ENCODE measurements at regions of chr18 and their contacts with region 1.

Region 1: DNA sequence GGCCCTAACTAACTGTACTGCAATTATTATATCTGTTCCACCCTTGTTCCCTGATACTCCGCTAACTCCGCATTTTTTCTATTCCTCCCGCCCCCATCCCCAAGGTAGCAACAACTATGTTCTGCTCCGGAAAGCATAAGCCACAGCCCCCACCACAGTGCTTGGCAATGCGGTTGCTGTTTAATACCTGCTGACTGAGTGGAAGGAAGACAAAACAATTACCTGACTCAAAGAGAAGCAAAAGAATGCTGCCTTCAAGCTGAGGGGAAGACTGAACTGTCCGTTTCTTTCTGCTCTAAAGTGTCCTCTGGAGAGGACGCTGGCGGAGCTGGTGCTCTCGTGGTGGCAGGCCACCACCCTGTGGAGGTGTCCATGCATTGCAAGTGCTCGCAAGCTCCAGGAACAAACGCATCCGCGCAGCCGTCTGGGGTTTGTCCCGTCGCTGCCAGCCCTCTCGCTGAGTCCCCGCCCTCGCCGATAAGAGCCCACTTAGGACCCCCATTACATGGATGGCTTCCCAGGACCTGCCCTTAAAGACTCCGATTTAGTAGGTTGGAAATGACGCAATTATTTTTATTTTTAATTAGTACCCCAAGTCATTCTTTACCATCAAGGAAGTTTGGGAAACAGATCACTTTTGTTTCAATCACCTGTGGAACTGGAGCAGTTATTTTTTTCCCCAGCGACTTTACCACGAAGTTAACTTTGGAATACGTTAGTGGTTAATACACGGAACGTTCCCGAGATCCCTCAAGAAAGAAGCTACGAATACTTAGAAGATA is 1.6 kb upstream of the MYL12A start:
- DNase-seq: peak; percentile 79
- H3K4me3 Mint-ChIP-seq: peak overlapping the region; percentile 90
- H3K27ac Mint-ChIP-seq: peak overlapping the region; percentile 92
- H3K4me1 Mint-ChIP-seq: peaks cover 32% of the 10 kb centered on the region
- H3K27me3 Mint-ChIP-seq: no peaks in the 10 kb centered on the region

Region 2: DNA sequence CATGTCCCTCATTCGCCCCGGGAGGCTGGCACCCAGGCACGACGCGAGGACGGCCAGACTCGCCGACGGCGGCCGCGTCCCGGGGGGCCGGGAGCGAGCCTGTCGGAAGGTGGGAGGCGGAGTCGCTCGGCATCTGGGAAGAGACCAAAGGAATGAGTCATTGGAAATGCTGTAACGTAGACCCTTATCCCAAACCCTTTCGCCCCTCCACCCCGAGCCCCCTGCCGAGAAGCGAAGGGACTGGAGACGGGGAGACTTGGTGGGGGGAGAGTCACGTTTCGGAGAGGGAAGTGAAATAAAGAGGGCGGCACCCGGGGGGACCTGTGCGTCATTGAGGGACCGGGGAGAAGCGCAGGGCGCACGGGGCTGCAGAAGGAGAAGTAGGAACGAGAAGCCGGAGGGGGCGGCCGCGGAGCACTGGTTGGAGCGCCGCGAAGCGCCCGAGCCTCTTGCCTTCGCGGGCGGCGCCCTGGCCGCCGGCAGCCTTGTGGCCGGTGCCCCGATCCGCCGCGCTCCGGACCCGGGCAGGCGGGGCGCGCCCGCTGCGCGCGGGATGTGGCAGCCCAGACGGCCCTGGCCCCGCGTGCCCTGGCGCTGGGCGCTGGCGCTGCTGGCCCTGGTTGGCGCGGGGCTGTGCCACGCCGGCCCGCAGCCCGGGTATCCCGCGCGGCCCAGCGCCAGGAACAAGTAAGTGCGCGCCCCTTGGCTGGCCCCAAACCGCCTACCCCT is 399.2 kb before region 1 on chr18 and contains the start of gene EMILIN2:
- intact Hi-C with region 1: loop called (anchors 5 kb)
- DNase-seq: peak; percentile 49
- H3K4me3 Mint-ChIP-seq: peak within 1 kb of the TSS; percentile 93
- H3K27ac Mint-ChIP-seq: peak within 1 kb of the TSS; percentile 95
- H3K4me1 Mint-ChIP-seq: peaks cover 36% of the 10 kb centered on the region
- H3K27me3 Mint-ChIP-seq: peaks cover 14% of the 10 kb centered on the region
- total RNA-seq, gene EMILIN2: 53.4 and 53.5 TPM in 2 replicates

Region 3: DNA sequence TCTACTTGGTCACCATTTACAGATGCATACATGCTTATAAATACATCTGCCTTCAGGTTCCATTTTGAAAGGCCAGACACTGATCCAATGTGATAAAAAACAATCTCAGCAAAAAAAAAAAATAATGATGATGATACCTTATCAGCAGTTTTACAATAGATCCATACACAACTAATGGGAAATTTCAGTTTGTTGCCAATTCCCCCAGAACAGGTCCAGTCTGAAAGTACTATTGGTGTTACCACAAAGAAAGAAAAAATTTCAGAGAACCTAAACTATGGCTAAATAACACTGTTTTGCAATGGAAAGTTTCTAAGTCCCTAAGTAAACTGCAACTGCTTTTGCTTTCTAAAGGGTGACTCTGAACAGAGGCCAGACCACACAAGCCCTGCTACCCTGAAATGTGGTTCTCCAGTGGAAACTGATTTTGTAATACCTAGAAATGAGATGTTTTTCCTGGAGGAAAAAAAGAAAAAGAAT is 287.2 kb before region 1 on chr18:
- intact Hi-C with region 1: loop called (anchors 2 kb)
- DNase-seq: no peak
- H3K4me3 Mint-ChIP-seq: peak overlapping the region; percentile 40
- H3K27ac Mint-ChIP-seq: peak overlapping the region; percentile 99
- H3K4me1 Mint-ChIP-seq: peaks cover 84% of the 10 kb centered on the region
- H3K27me3 Mint-ChIP-seq: no peaks in the 10 kb centered on the region

Region 4: DNA sequence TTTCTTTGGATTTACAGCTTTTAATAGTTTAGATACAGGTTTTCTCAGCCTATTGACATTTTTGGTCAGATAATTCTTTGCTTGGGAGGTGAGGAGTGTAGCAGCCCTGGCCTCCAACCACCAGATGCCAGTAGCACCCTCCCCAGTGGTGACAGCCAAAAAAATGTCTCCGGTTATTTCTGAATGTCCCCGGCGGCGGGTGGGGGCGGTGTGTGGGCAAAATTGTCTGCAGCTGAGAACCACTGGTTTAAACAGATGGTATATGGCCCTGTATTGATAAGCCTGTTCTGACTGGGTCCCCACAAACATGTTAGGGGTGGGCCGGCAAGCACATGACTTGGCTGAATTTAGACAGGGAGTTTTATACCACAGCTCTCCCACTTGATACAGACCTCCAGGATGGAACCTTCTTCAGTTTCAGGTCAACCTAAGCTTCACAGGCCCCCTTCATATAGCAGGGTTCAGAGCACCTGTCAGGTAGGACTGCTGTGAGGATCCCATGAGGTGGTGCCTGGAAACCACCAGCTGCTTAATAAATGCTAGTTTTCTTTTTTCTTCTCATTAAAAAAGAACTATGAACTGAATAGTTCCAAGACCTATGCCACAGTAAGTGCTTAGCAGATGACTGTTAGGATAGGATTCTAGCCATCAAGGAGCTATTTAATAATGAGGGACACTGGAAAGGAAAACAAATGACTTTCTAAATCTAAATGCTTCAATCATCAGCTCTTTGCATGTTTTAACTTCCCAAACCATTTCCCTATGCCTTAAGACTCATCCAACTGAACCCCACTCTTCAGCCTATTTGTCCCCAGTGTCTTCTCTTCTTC is 251.2 kb before region 1 on chr18:
- intact Hi-C with region 1: loop called (anchors 1 kb)
- DNase-seq: peak; percentile 69
- H3K4me3 Mint-ChIP-seq: peak overlapping the region; percentile 43
- H3K27ac Mint-ChIP-seq: peak overlapping the region; percentile 89
- H3K4me1 Mint-ChIP-seq: peaks cover 73% of the 10 kb centered on the region
- H3K27me3 Mint-ChIP-seq: no peaks in the 10 kb centered on the region

Region 5: GRCh38 chr18:3062798-3063680 is 183.0 kb before region 1 on chr18:
- intact Hi-C with region 1: loop called (anchors 1 kb)
- DNase-seq: peak; percentile 62
- H3K4me3 Mint-ChIP-seq: peak overlapping the region; percentile 67
- H3K27ac Mint-ChIP-seq: peak overlapping the region; percentile 87
- H3K4me1 Mint-ChIP-seq: peaks cover 63% of the 10 kb centered on the region
- H3K27me3 Mint-ChIP-seq: no peaks in the 10 kb centered on the region

Region 6: DNA sequence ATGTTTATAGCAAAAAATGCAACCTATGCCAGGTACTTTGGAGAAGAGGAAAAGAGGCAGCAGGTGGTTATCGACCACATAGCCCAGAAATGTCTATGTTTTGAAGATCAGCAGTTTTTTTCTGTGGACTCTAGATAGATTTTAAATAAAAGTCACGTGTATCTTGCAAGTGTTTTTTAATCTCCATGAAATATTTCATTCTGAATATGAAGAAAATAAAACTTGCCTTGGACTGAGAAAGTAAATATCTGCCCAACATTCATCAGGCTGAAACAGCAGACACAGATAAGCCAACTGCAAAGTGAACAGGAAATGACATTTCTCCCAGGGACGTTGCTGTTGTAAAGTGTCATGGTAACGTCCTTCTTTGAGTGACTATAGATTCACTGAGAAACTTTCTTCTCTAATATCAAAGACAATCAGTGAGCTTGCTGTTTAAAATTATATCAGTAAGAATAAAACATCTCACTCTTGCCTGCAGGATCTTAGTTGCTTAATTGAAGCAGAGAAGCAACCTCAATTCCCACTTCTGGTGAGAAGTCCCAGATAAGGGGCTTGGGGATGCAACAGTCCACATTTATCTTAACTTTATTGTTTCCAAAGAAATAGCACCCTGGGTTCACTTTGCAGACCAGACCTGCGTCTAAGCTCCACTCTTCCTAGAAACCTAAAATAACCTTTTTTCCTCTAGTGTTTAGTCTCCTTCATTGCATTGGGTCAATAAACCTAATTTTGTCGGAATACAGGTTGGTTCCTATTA is 32.6 kb before region 1 on chr18:
- intact Hi-C with region 1: loop called (anchors 2 kb)
- DNase-seq: no peak
- H3K4me3 Mint-ChIP-seq: no peak overlapping the region
- H3K27ac Mint-ChIP-seq: no peak overlapping the region
- H3K4me1 Mint-ChIP-seq: peaks cover 15% of the 10 kb centered on the region
- H3K27me3 Mint-ChIP-seq: peaks cover 7% of the 10 kb centered on the region